K562 (cell line): ENCODE measurements at regions of chr10 and their contacts with region 1.

Region 1: DNA sequence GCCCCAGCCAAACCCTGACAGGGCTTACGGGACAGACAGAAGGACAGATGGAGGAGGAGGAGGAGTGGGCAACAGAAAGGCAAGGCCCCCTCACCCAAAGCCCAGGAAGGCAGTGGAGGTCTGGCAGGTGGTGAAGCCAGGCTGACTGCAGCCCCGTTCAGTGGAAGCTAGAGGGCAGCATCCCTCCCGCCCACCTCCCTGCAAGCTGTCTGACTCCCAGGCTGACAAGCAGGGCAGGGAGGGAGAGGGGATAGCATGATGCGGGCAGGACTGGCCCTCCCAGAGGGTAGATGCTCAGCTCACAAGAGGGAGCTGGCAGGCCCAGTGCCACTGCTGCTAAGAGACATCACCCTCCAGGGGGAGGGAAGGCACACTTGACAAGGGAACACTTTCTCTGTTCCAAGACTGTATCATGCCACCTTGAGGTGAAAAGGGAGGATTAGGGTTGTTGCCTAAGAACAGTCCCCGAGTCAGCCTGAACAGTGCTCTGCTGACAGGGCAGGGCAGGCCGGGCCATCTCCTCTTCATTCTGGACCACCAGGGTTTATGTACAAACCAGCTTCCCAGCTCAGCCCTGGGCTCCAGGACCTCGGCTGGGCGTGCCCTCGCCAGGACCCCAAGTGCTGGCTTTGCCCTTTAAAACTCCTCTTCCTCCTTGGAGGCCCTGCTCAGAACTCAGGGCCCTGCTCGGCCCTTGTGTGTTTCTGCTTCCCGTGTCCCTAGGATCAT is 61.8 kb downstream of the RASGEF1A start:
- DNase-seq: peak; percentile 64 to 83 (median 68)
- ATAC-seq: peak; percentile 41
- H3K4me3 ChIP-seq: no peak overlapping the region
- H3K27ac ChIP-seq: no peak overlapping the region
- H3K4me1 ChIP-seq: peaks cover 10 to 66% of the 10 kb centered on the region in 2 experiments; a peak in 3 of 5 replicates
- H3K27me3 ChIP-seq: 0 out of 5 replicates have a peak, but pooled peaks cover 0 to 8% of the 10 kb centered on the region in 2 experiments
- CTCF ChIP-seq: peak; percentile 78 to 94 (median 94)
- EP300 ChIP-seq: no peak
- POLR2A ChIP-seq: no peak
- RAD21 ChIP-seq: peak; percentile 22 to 66; a peak in 3 of 4 replicates

Region 2: DNA sequence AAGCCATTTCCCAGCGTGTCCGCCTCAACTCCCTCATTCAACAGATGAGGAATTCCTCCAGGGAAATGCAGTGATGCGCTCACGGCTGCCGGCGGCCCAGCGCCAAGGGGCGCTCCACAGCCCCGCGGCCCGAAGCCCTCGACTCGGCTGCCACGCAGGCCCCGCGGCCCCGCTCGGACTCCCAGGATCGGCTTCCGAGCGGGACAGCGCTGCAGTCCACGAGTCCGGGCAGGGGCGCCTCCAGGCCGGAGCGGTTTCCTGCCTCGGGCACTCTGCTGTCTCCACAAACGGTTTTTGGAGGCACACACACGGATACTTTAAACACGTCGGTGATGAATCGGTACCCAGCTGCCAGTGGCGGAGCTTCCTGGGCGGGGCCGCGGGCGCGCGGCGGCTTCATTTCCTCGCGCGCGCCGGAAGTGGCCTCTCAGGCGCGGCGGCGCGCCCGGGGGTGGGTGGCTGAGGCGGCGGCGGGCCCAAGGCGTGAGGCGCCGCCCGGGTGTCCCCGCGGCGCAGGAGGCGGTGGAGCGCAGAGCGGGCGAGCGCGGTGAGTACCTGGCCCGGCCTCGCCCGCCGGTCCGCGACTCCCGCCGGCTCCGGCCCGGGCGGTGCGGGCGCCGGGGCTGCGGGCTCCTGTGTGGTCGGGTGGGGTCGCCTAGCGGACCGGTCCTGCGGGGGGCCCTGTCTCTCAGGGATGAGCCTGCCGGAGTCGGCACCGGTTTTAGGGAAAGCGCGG is 66.9 kb before region 1 on chr10 and contains the start of gene CSGALNACT2:
- CTCF ChIA-PET with region 1: no interaction called
- POLR2A ChIA-PET with region 1: interaction called, 3 read pairs
- in situ Hi-C with region 1: no loop called
- intact Hi-C with region 1: loop called (anchors 5 kb)
- DNase-seq: peak; percentile 87 to 92 (median 89)
- ATAC-seq: peak; percentile 97
- H3K4me3 ChIP-seq: peak within 1 kb of the TSS; percentile 87
- H3K27ac ChIP-seq: peak within 1 kb of the TSS; percentile 32; the same call in 2 of the 3 replicates
- H3K4me1 ChIP-seq: peaks cover 9 to 25% of the 10 kb centered on the region in 2 experiments; a peak in 4 of 5 replicates
- H3K27me3 ChIP-seq: peaks cover 0 to 4% of the 10 kb centered on the region in 2 experiments; a peak in 2 of 5 replicates
- CTCF ChIP-seq: 0 out of 6 replicates have a peak, but pooled peaks of 1 of the 3 experiments have one; percentile 4
- EP300 ChIP-seq: no peak
- POLR2A ChIP-seq: peak; percentile 59; the same call in 1 of the 2 replicates
- RAD21 ChIP-seq: no peak
- polyA plus RNA-seq, gene CSGALNACT2: 1.4 to 1.9 TPM